Right cardiac atrium (tissue), 5 donors: ENCODE measurements at regions of chr13 and their contacts with region 1.

Region 1: GRCh38 chr13:27362064-27362883 is 62.1 kb upstream of the GTF3A start:
- DNase-seq: peak; percentile 85 to 96 (median 94)
- ATAC-seq: peak; percentile 95 to 97
- H3K4me3 ChIP-seq: peak overlapping the region; percentile 26
- H3K27ac ChIP-seq: no peak overlapping the region
- H3K4me1 ChIP-seq: no peaks in the 10 kb centered on the region
- H3K27me3 ChIP-seq: no peaks in the 10 kb centered on the region

Region 2: GRCh38 chr13:26985285-26985878 is 376.9 kb before region 1 on chr13:
- intact Hi-C with region 1: loop called (anchors 2 to 5 kb)
- DNase-seq: peak in 2 of 3 donors; percentile 40 to 68
- ATAC-seq: peak; percentile 69 to 71
- H3K4me3 ChIP-seq: no peak overlapping the region
- H3K27ac ChIP-seq: no peak overlapping the region
- H3K4me1 ChIP-seq: peaks cover 2% of the 10 kb centered on the region
- H3K27me3 ChIP-seq: no peaks in the 10 kb centered on the region

Region 3: DNA sequence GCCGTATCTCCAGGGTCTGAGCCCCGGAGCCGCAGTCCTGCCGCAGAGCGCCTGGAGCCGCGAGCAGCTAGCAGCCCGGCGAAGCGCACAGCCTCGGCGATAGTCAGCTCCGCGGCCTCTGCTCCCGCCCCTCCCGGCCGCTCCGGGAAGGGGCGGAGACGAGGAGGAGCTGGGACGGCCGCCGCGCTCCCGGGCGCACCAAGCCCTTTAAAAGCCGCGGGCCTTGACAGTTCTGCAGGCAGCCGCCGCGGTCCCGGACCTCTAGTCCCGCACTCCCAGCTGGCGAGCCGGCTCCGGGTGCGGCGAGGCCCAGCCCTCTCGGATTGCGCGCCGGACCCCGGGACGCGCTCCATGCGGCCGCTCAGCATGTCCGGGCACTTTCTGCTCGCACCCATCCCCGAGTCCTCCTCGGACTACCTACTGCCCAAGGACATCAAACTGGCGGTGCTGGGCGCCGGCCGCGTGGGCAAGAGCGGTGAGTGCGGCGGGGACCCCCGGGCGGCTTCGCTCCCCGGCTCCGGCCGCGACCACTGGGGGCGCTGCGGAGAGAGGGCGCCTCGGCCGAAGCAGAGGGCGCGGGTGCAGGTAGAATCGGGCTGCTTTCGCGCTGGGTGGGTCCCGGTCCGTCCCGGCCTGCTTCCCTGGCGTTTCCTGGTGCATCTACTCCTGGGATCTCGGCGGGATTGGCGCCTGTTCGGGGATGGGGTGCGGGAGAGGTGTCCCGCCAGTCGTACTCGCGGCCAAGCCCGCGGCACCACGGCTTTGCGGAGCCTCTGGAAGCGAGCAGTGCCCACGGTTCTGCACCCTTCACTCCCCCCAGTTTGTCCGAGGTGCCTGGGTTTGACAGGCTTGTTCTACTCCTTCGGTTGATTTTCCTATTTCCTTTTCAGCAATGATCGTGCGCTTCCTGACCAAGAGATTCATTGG is 91.4 kb before region 1 on chr13 and contains the start of gene RASL11A:
- intact Hi-C with region 1: loop called in 1 of 4 experiments (anchors 10 kb)
- DNase-seq: peak; percentile 88 to 95 (median 95)
- ATAC-seq: peak; percentile 95 to 96
- H3K4me3 ChIP-seq: peak within 1 kb of the TSS; percentile 78
- H3K27ac ChIP-seq: peak within 1 kb of the TSS; percentile 86
- H3K4me1 ChIP-seq: no peaks in the 10 kb centered on the region
- H3K27me3 ChIP-seq: no peaks in the 10 kb centered on the region
- total RNA-seq, gene RASL11A: 10.5 to 35.8 (median 19.0) TPM

Region 4: GRCh38 chr13:27980280-27980998 is 618.2 kb after region 1 on chr13:
- intact Hi-C with region 1: loop called (anchors 5 to 10 kb)
- DNase-seq: no peak
- ATAC-seq: peak in 1 of 2 donors; percentile 12
- H3K4me3 ChIP-seq: no peak overlapping the region
- H3K27ac ChIP-seq: no peak overlapping the region
- H3K4me1 ChIP-seq: no peaks in the 10 kb centered on the region
- H3K27me3 ChIP-seq: peaks cover 12% of the 10 kb centered on the region